PC-9 (cell line): ENCODE measurements at regions of chr2 and their contacts with region 1.

Region 1: DNA sequence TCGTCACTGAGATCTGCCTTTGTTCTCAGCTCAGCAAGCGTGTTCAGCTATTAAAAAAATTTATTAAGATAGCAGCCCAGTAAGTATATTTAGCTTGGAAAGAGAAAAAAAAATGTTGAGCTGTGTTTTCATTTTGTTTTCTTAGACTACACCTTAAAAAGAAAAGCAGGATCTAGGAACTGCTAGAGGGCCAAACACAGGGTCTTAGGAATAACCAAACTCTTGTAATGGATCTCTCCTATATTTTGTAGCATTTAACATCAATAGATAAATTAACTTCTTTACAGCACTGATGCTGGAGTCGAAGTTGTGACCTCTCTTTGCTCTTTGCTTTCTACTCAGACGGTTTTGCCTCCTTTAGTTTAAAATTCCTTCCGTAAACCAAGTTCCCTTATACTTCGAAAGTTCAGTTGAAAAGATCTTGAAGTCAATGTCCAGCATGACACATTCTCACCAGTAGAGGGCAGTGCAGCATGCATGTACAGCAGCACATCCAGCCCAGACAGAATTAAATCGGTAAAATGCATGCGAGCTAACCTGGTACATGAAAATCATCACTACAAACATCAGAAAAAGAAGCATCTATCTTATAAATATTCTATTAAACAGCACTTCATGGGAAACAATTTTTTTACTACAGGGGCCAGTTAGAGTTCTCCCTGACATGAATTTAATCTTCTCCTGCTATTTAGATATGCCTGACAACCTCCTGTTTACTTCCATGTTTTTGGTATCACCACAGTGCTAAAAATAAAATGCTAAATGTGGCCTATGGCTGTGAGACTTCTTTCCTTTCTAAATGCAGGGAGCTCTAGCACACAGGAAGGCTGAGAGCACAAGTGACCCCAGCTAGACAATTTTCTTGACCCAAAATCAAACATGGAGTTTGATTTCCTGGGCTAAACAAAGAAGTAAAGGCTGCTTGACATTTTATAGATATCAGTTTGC is 48.2 kb upstream of the MAP3K20 start:
- DNase-seq: peak; percentile 73 to 84
- H3K4me3 ChIP-seq: no peak overlapping the region
- H3K27ac ChIP-seq: no peak overlapping the region
- H3K4me1 ChIP-seq: no peaks in the 10 kb centered on the region
- H3K27me3 ChIP-seq: no peaks in the 10 kb centered on the region
- CTCF ChIP-seq: peak; percentile 100

Region 2: DNA sequence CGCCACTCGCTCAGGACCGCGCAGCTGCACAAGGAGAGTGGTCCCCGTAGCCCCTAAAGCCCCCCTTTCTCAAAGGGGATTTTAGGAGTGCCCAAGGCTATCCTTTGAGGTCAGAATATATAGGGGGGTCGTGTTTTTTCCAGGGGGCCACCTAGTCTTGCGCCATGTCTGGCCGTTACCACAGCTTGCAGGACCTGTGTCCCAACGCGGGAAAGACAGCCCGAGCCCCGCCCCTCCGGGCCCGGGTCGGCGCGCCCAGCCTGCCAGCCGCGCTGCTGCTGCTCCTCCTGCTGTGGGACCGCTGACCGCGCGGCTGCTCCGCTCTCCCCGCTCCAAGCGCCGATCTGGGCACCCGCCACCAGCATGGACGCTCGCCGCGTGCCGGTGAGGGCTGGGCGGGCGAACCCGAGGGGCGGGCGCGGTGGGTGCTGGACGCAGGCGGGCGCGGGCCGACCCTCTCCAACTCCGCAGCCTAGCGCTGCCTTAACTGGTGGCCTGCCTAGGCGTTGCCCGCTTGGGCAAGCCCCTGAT is 327.2 kb after region 1 on chr2 and contains the start of gene CDCA7:
- CTCF ChIA-PET with region 1: no interaction called
- POLR2A ChIA-PET with region 1: no interaction called
- intact Hi-C with region 1: loop called (anchors 10 kb)
- DNase-seq: peak; percentile 68 to 85
- H3K4me3 ChIP-seq: peak within 1 kb of the TSS; percentile 97
- H3K27ac ChIP-seq: no peak within 1 kb of the TSS
- H3K4me1 ChIP-seq: peaks cover 20% of the 10 kb centered on the region
- H3K27me3 ChIP-seq: no peaks in the 10 kb centered on the region
- CTCF ChIP-seq: no peak
- total RNA-seq, gene CDCA7: 26.1 and 34.2 TPM in 2 replicates